ENCODE measurements at regions of chr6 and their contacts with region 1.

Region 1: DNA sequence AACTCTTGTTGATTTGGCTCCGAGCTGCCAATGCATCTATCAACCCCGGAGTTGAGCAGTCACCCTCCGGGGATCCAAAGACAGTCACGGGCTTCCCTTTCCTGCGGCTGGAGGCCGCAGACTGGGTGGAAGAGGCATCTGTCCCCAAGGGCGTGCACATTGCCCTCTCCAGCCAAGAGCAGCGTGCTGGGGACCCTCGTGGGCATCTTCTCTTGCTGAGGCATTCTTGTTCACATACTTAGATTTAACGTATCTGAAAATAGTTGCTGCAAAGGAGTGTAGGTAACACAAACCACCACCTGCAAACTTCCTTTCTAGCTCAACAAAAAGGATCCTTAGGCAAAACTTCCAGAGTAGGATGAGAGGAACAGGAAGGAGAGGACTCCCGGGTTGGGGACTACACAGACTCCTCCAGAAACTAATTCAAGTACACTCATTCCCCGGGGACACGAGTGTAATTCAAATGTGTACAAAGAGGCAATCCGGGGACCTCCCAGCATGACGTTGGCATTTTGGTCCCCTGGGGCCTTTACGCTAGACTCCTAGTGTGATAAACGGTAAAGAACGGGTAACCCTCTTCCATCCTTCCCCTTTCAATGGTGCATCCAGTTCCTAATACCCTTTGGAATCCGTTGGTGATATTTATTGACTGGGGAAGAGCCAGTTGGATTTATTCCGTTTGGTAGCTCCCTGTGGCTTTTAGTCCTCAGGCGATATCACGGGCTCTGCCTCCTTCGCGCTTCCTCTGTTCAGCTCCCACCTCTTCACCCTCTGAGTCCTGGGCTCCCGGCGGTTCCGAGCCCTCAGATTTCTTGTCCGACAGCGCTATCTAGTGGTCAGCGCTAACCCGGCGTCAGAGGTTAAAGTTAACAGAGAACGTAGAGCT is 2.7 kb upstream of the COL12A1 start:
- DNase-seq: peak; percentile 59 to 80 (median 74)
- ATAC-seq: peak; percentile 90
- H3K4me3 ChIP-seq: peak overlapping the region; percentile 47
- H3K4me3 Mint-ChIP-seq: peak overlapping the region; percentile 58 to 92 (median 80)
- H3K27ac ChIP-seq: no peak overlapping the region
- H3K27ac Mint-ChIP-seq: peak overlapping the region in 3 of 9 donors; percentile 32 to 60 (median 38)
- H3K4me1 ChIP-seq: peaks cover 24 to 45% of the 10 kb centered on the region in 2 donors
- H3K4me1 Mint-ChIP-seq: peaks cover 43 to 59% (median 53%) of the 10 kb centered on the region in 7 donors
- H3K27me3 ChIP-seq: peaks cover 4 to 18% of the 10 kb centered on the region in 2 donors
- H3K27me3 Mint-ChIP-seq: peaks cover 72 to 78% (median 75%) of the 10 kb centered on the region in 5 donors

Region 2: GRCh38 chr6:73732845-73733675 is 1475.5 kb before region 1 on chr6:
- CTCF ChIA-PET with region 1: interaction called, 90 read pairs
- POLR2A ChIA-PET with region 1: no interaction called
- intact Hi-C with region 1: no loop called
- DNase-seq: peak; percentile 34 to 80 (median 69)
- ATAC-seq: peak; percentile 98
- H3K4me3 ChIP-seq: no peak overlapping the region
- H3K4me3 Mint-ChIP-seq: no peak overlapping the region
- H3K27ac ChIP-seq: no peak overlapping the region
- H3K27ac Mint-ChIP-seq: peak overlapping the region in 3 of 9 donors; percentile 48 to 63 (median 58)
- H3K4me1 ChIP-seq: no peaks in the 10 kb centered on the region
- H3K4me1 Mint-ChIP-seq: peaks cover 0 to 21% (median 0%) of the 10 kb centered on the region in 7 donors
- H3K27me3 ChIP-seq: no peaks in the 10 kb centered on the region
- H3K27me3 Mint-ChIP-seq: peaks cover 0 to 4% (median 0%) of the 10 kb centered on the region in 5 donors

Region 3: DNA sequence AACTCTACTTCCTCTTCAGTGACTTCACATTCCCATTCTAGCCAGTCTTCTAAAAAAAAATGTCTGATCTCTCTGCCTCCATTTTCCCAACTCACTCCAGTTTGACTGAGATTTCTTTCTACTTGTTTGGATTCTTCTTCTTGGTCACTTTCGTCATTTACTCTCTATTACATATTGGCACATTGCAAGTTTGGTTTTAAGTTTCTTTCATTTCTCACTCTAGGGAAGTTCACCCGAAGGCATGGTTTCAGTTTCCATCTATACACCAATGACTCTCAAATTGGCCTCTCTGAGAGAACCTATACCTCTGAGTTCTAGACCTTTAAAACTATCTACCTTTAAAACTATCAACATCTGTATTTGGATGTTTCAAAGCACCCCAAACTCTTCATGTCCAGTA is 1461.3 kb before region 1 on chr6:
- CTCF ChIA-PET with region 1: interaction called, 14 read pairs
- POLR2A ChIA-PET with region 1: no interaction called
- intact Hi-C with region 1: no loop called
- DNase-seq: no peak
- ATAC-seq: peak; percentile 69
- H3K4me3 ChIP-seq: peak overlapping the region; percentile 17
- H3K4me3 Mint-ChIP-seq: no peak overlapping the region
- H3K27ac ChIP-seq: no peak overlapping the region
- H3K27ac Mint-ChIP-seq: no peak overlapping the region
- H3K4me1 ChIP-seq: no peaks in the 10 kb centered on the region
- H3K4me1 Mint-ChIP-seq: peaks cover 0 to 2% (median 0%) of the 10 kb centered on the region in 7 donors
- H3K27me3 ChIP-seq: no peaks in the 10 kb centered on the region
- H3K27me3 Mint-ChIP-seq: no peaks in the 10 kb centered on the region

Region 4: DNA sequence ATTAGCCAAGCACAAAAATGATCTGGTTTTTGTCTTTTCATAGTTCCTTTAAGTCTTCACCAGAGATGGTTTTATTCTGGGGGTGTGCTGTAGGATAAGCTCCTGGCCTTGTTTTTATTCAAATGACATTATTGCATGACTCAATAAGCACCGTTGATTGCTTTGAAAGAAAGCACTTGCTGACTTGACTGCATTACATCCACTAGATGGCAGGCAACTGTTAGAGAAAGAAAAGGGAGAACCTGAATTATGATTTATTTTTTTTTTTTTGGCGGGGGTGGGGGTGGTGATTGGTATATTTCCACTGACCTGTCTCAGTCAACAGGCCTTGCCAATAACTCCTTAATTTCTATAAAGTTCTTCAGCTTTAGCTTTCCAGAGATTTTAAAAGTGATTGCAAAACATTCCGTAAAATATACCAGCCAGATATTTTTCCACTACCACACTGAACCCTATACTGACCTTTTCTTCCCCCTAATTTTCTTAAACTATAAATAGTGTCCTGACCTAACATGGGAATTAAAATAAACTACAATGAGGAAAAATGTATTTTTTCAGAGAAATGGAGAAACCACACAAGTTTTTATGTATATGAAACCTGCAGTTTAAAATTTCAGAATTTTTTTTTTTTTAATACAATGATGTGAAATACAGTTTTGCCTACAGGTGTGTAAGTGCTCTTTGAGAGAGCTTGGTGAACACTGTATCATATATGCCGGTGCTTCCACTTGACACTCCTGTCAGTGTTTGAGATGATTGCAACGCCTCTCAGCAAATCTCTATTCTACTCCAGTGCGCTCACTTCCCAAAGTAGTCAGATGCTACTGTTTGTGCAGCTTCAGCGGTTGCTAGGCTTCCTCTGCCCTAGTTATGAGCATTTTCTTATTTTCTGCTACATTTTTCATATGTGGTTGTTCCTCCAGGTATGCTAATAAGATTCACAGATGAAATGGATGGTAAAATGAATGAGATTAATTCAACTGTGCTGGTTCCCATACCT is 1238.3 kb before region 1 on chr6:
- CTCF ChIA-PET with region 1: no interaction called
- POLR2A ChIA-PET with region 1: no interaction called
- intact Hi-C with region 1: loop called in 1 of 2 experiments (anchors 2 kb)
- DNase-seq: no peak
- ATAC-seq: no peak
- H3K4me3 ChIP-seq: no peak overlapping the region
- H3K4me3 Mint-ChIP-seq: no peak overlapping the region
- H3K27ac ChIP-seq: no peak overlapping the region
- H3K27ac Mint-ChIP-seq: no peak overlapping the region
- H3K4me1 ChIP-seq: no peaks in the 10 kb centered on the region
- H3K4me1 Mint-ChIP-seq: no peaks in the 10 kb centered on the region
- H3K27me3 ChIP-seq: no peaks in the 10 kb centered on the region
- H3K27me3 Mint-ChIP-seq: peaks cover 0 to 7% (median 0%) of the 10 kb centered on the region in 5 donors

Region 5: GRCh38 chr6:74343804-74344203 is 864.7 kb before region 1 on chr6:
- CTCF ChIA-PET with region 1: no interaction called
- POLR2A ChIA-PET with region 1: no interaction called
- intact Hi-C with region 1: loop called in 1 of 2 experiments (anchors 10 kb)
- DNase-seq: no peak
- ATAC-seq: no peak
- H3K4me3 ChIP-seq: no peak overlapping the region
- H3K4me3 Mint-ChIP-seq: no peak overlapping the region
- H3K27ac ChIP-seq: no peak overlapping the region
- H3K27ac Mint-ChIP-seq: no peak overlapping the region
- H3K4me1 ChIP-seq: no peaks in the 10 kb centered on the region
- H3K4me1 Mint-ChIP-seq: no peaks in the 10 kb centered on the region
- H3K27me3 ChIP-seq: no peaks in the 10 kb centered on the region
- H3K27me3 Mint-ChIP-seq: no peaks in the 10 kb centered on the region

Region 6: GRCh38 chr6:75220357-75220756 is 11.8 kb after region 1 on chr6:
- CTCF ChIA-PET with region 1: interaction called, 13 read pairs
- POLR2A ChIA-PET with region 1: interaction called, 3 read pairs
- intact Hi-C with region 1: no loop called
- DNase-seq: no peak
- ATAC-seq: no peak
- H3K4me3 ChIP-seq: no peak overlapping the region
- H3K4me3 Mint-ChIP-seq: no peak overlapping the region
- H3K27ac ChIP-seq: no peak overlapping the region
- H3K27ac Mint-ChIP-seq: no peak overlapping the region
- H3K4me1 ChIP-seq: no peaks in the 10 kb centered on the region
- H3K4me1 Mint-ChIP-seq: peaks cover 0 to 3% (median 0%) of the 10 kb centered on the region in 7 donors
- H3K27me3 ChIP-seq: peaks cover 0 to 4% of the 10 kb centered on the region in 2 donors
- H3K27me3 Mint-ChIP-seq: peaks cover 18 to 51% (median 39%) of the 10 kb centered on the region in 5 donors